ENCODE measurements at regions of chr12 and their contacts with region 1.

Region 1: GRCh38 chr12:29451886-29452285 is 45.6 kb downstream of the OVCH1 start:
- DNase-seq: no peak
- H3K4me3 ChIP-seq: no peak overlapping the region
- H3K27ac ChIP-seq: no peak overlapping the region
- H3K4me1 ChIP-seq: no peaks in the 10 kb centered on the region
- H3K27me3 ChIP-seq: peaks cover 15% of the 10 kb centered on the region
- CTCF ChIP-seq: no peak

Region 2: DNA sequence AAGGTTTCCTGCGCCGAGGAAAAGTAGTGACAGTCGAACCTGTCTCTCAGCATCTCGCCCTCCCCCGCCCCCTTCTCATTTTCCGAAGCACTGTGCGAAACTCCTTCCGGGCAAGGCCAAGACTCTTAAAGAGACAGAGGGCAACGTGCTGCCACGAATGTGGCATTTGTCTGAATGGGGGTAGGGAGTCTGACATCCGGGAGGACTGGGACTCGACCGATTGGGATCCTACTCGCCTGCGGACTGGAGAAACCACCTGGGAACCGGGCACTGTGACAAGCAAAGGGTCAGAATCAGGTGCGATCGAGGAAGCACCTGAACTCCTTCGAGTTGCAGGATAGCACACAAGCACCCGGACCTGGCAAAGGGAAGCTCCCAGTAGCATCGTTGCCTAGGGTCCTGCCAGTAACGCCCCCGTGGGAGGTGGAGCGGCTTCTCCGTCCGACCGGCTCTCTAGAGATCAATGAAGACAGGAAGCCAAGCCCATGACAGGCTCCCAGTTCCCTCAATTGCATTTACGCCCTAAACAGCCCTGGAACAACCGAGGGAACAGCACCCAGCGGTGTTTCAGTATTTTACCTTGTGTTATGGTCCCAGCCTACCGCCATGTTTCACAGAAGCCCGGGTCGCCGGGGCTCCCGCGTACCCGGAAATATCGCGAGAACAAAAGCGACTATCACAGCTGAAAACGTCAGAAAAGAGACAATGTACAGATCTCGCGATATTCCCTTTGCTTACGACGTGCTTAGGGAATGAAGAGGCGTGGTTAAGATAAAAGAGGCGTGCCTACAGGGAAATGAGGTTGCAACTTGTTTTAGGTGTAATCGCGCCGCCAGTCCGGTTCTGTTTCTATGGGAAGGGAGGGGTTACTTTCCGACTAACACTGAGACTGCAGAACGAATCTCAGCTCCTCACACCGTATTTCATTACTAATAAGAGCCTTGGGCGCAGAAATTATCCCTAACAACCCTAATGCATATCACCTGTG is 71.1 kb before region 1 on chr12 and contains the start of gene ERGIC2:
- CTCF ChIA-PET with region 1: no interaction called
- POLR2A ChIA-PET with region 1: no interaction called
- intact Hi-C with region 1: no loop called
- DNase-seq: peak; percentile 99
- H3K4me3 ChIP-seq: peak within 1 kb of the TSS; percentile 90
- H3K27ac ChIP-seq: peak within 1 kb of the TSS; percentile 93
- H3K4me1 ChIP-seq: peaks cover 9% of the 10 kb centered on the region
- H3K27me3 ChIP-seq: no peaks in the 10 kb centered on the region
- CTCF ChIP-seq: no peak
- total RNA-seq, gene ERGIC2: 76.9 and 89.1 TPM in 2 replicates

Region 3: GRCh38 chr12:29503283-29503682 is 51.4 kb after region 1 on chr12:
- CTCF ChIA-PET with region 1: no interaction called
- POLR2A ChIA-PET with region 1: no interaction called
- intact Hi-C with region 1: loop called (anchors 5 kb)
- DNase-seq: no peak
- H3K4me3 ChIP-seq: no peak overlapping the region
- H3K27ac ChIP-seq: no peak overlapping the region
- H3K4me1 ChIP-seq: peaks cover 3% of the 10 kb centered on the region
- H3K27me3 ChIP-seq: no peaks in the 10 kb centered on the region
- CTCF ChIP-seq: no peak